Calu3 (cell line): ENCODE measurements at regions of chr7 and their contacts with region 1.

Region 1: DNA sequence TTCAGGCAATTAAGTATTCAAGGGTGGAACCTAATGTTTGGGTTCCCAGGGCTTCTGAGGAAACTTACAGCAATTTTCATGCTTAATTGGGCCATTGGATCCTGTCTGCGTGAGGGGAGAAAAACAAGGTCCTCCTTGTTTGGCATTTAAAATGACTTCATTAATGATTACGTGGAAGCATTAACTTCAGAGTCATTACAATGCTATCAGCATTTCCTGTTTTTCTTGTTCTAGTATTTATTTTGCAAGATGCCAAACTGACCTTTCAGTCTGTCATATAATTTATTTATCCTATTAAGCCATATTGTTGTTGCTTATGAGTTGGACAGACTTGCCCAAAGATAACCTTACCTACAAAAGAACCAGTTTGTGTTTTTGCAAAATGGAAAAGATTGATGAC is 324.1 kb upstream of the LRRN3 start:
- DNase-seq: peak; percentile 4
- H3K4me3 Mint-ChIP-seq: peak overlapping the region; percentile 0
- H3K27ac Mint-ChIP-seq: peak overlapping the region; percentile 24
- H3K4me1 Mint-ChIP-seq: peaks cover 17% of the 10 kb centered on the region
- H3K27me3 Mint-ChIP-seq: no peaks in the 10 kb centered on the region
- CTCF ChIP-seq: no peak

Region 2: DNA sequence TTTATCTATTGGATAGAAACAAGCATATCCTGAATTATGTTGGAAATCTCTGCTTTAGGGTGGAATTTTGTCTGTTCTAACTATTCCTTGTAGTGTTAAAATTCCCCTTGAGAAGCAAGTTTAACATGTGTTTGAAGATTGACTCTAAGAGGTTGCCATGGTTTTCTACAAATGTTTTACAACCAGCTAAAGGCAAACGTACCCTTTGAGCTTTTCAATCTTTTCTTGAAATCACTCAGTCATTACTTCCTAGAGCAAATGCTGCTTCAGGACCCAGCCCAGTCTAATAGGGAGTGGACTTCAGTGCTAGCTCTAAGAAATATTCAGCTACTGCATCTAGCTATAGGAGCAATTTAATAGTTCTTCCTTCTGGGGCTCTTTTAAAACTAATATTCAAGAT is 1564.6 kb after region 1 on chr7:
- CTCF ChIA-PET with region 1: interaction called, 11 read pairs
- intact Hi-C with region 1: no loop called
- DNase-seq: no peak
- H3K4me3 Mint-ChIP-seq: no peak overlapping the region
- H3K27ac Mint-ChIP-seq: no peak overlapping the region
- H3K4me1 Mint-ChIP-seq: no peaks in the 10 kb centered on the region
- H3K27me3 Mint-ChIP-seq: no peaks in the 10 kb centered on the region
- CTCF ChIP-seq: no peak